ENCODE measurements at regions of chr3 and their contacts with region 1.

Region 1: DNA sequence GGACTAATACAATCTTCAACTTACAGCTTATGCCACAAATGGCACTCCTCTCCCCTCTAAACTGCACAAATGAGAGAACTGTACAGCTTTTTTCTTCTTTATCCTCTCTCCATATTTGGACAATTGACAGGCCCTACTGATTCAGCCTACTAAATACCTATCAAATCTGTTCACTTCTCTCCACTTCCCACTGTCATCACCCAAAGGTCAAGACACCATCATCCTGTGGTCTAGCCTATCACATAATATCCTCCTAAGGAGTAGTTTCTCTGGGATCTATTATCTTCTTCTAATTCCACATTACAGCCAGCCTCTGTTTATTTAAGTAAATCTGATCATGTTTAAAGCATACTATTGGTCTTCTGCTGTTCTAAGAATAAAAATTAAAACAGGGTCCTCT is 33.0 kb upstream of the SLC12A8 start:
- DNase-seq: no peak

Region 2: DNA sequence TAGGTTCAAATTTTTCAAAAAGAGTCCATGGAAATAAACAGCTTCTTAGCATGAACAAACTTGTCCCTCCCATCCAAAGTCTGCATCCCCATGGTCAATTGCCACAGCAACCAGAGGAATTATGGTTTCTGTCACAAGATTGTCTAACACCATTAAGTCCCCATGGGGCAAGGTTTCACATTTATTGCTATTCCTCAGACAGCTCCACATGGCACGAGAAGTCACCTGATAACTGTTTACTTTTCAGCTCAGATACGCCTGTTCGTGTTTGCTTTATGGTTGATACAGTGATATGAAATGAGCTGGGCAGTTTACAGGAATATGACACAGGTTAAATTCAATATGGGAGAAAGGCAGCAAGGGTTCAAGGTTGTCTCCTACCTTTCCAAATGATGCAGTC is 273.1 kb before region 1 on chr3:
- intact Hi-C with region 1: no loop called
- DNase-seq: no peak

Region 3: DNA sequence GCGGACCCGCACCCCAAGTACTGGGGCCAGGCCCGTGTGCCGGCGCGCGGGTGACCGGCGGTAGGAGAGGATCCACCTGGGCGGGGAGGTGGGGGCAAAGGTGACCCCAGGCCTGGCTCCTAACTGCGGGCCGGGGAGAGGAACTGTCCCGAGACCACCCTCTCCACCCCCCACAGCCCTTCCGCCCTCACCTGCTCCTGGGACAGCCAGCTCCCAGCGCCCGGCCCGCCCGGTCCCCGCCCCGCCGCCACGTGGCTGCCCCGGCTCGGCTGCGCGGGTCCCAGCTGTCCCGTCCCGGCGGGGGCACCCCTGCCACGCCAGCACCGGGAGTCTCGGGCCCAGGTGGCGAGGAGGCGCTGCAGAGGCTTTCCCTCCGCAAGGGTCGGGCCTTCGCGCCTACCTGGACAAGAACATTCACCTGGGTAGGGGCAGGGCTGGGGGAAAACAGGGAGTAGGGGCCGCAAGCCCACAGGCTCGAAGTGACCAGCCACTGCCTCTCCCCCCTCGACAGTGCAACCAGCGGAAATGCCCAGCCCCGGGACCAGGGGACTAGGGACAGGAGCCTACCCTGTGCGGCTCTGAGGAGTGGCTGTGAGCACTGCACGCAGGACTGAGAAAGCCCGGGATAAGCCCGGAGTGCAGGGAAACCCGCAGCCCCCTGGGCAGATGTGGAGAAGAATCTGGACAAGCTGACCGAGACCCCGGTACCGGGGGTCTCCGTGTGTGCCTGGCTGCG is 32.8 kb before region 1 on chr3 and contains the start of gene SLC12A8:
- intact Hi-C with region 1: loop called (anchors 1 kb)
- DNase-seq: peak in 1 of 10 donors; percentile 69